OCI-LY7 (cell line): ENCODE measurements at regions of chr2 and their contacts with region 1.

Region 1: GRCh38 chr2:3651691-3652648 is 6.0 kb upstream of the ALLC start:
- DNase-seq: peak; percentile 92
- H3K4me3 ChIP-seq: peak overlapping the region; percentile 42
- H3K27ac ChIP-seq: peak overlapping the region; percentile 61
- H3K4me1 ChIP-seq: peaks cover 24% of the 10 kb centered on the region
- CTCF ChIP-seq: no peak

Region 2: GRCh38 chr2:3470166-3470651 is 181.8 kb before region 1 on chr2:
- CTCF ChIA-PET with region 1: no interaction called
- POLR2A ChIA-PET with region 1: no interaction called
- intact Hi-C with region 1: no loop called
- DNase-seq: no peak
- H3K4me3 ChIP-seq: no peak overlapping the region
- H3K27ac ChIP-seq: no peak overlapping the region
- H3K4me1 ChIP-seq: no peaks in the 10 kb centered on the region
- CTCF ChIP-seq: no peak

Region 3: DNA sequence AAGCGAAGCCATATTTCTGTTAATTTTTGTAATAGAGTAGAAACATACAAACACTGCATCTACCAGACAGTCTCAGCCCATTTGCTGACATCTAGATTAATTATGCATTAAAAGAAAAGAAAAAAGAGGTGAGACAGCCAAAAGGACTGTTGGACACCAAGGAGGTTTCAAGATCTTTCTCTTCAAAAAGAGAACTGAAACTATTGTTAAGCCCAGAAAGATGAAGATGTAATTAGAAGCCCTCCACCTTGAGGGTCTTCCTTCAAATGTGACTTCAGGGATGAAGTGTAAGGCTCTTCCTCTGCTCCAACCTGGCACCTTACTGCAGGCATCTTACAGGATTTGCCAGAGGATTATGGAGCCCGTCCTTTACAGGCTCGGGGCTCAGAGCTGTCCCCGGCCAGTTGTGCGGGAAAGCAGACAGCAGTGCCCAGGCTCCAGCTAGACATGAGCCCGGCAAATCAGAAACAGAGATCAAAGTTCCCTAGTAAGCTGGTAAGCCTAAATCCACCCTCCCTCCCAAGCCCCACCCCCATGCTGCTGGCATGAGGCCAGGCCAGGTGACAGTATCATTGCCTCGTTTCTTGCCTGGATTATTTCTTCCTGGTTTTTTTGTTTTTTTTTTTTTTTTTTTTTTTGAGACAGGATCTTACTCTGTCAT is 171.5 kb before region 1 on chr2:
- CTCF ChIA-PET with region 1: interaction called, 4 read pairs
- POLR2A ChIA-PET with region 1: interaction called, 4 read pairs
- intact Hi-C with region 1: loop called (anchors 1 kb)
- DNase-seq: peak; percentile 69
- H3K4me3 ChIP-seq: no peak overlapping the region
- H3K27ac ChIP-seq: peak overlapping the region; percentile 74
- H3K4me1 ChIP-seq: peaks cover 23% of the 10 kb centered on the region
- CTCF ChIP-seq: no peak

Region 4: GRCh38 chr2:3536682-3537632 is 115.0 kb before region 1 on chr2:
- CTCF ChIA-PET with region 1: no interaction called
- POLR2A ChIA-PET with region 1: no interaction called
- intact Hi-C with region 1: loop called (anchors 5 kb)
- DNase-seq: peak; percentile 83
- H3K4me3 ChIP-seq: peak overlapping the region; percentile 70
- H3K27ac ChIP-seq: peak overlapping the region; percentile 34
- H3K4me1 ChIP-seq: peaks cover 20% of the 10 kb centered on the region
- CTCF ChIP-seq: peak; percentile 84

Region 5: GRCh38 chr2:3575534-3576262 is 76.3 kb before region 1 on chr2:
- CTCF ChIA-PET with region 1: interaction called, 3 read pairs
- POLR2A ChIA-PET with region 1: interaction called, 8 read pairs
- intact Hi-C with region 1: loop called (anchors 1 kb)
- DNase-seq: peak; percentile 42
- H3K4me3 ChIP-seq: peak overlapping the region; percentile 82
- H3K27ac ChIP-seq: peak overlapping the region; percentile 66
- H3K4me1 ChIP-seq: peaks cover 49% of the 10 kb centered on the region
- CTCF ChIP-seq: no peak

Region 6: GRCh38 chr2:3588084-3588483 is 63.9 kb before region 1 on chr2:
- CTCF ChIA-PET with region 1: no interaction called
- POLR2A ChIA-PET with region 1: no interaction called
- intact Hi-C with region 1: no loop called
- DNase-seq: no peak
- H3K4me3 ChIP-seq: no peak overlapping the region
- H3K27ac ChIP-seq: no peak overlapping the region
- H3K4me1 ChIP-seq: no peaks in the 10 kb centered on the region
- CTCF ChIP-seq: no peak

Region 7: GRCh38 chr2:3662239-3662638 is 10.3 kb after region 1 on chr2:
- CTCF ChIA-PET with region 1: interaction called, 4 read pairs
- POLR2A ChIA-PET with region 1: interaction called, 21 read pairs
- intact Hi-C with region 1: no loop called
- DNase-seq: peak; percentile 71
- H3K4me3 ChIP-seq: no peak overlapping the region
- H3K27ac ChIP-seq: peak overlapping the region; percentile 61
- H3K4me1 ChIP-seq: peaks cover 22% of the 10 kb centered on the region
- CTCF ChIP-seq: peak; percentile 66

Region 8: DNA sequence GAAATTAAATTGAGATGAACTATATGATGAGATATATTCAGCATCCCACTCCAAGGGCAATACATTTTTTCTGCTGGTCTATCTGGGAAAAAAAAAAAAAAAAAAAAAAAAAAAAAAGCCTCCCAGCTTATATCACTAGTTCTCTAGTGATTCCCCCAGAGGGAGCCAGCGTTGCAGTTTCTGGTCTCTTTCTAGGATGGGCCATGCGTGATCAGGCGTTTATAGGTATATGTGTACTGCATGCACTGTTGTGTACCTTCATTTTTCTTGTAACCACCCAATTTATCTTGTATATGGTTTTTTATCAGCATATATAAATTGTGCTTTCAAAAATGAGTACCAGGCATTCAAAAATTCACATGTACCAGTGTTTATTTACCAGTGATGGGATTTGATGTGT is 86.5 kb after region 1 on chr2:
- CTCF ChIA-PET with region 1: no interaction called
- POLR2A ChIA-PET with region 1: no interaction called
- intact Hi-C with region 1: no loop called
- DNase-seq: peak; percentile 47
- H3K4me3 ChIP-seq: no peak overlapping the region
- H3K27ac ChIP-seq: no peak overlapping the region
- H3K4me1 ChIP-seq: no peaks in the 10 kb centered on the region
- CTCF ChIP-seq: peak; percentile 67